Activated naive CD8-positive, alpha-beta T cell treated with anti-CD3 and anti-CD28 coated beads, Interleukin-2, amount 10 ng/mL, durations not matched to agents 7 days and 5 days (primary cell): ENCODE measurements at regions of chr1 and their contacts with region 1.

Region 1: DNA sequence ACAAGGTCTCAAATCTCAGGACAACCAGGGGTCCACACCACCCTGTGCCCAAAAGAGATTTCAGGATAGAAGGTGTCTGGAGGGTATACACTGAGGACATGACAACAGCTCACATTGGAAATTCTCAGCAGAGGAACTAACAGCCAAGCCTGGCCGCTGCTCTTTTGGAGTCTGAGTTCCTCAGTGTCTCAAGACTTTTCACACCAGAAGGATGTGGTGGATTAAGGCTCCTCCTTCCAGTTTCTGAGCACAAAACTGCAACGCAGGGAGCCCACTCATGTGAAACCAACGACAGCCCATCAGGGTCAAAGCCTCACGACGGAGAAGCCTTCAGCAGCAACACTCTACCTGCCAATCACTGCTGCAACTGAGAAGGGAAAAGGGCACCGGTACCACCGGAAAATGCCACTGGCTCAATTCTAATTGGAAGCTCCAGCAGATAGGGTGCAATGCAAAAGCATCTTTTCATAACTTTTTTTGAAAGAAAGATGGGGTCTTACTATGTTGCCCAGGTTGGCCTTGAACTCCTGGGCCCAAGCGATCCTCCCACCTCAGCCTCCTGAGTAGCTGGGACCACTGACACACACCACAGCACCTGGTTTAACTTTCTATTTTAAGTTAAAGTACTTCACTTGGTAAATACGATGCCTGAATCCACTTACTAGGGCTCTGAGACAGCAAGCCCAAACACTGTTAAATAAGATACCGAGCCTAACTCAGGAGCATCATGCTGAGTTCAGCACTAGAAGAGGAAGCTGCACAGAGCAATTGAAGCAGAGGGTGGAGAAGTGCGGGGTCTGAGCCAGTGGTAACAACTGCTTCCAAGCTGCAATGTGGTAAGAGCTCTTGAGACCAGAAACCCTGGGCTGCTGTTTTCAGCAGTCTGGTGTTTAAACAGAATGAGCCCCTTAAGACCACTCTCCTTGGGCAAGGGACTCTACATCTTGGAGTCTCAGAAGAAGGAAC is 7.8 kb downstream of the CAPZB start:
- DNase-seq: peak; percentile 62
- ATAC-seq: peak; percentile 82
- H3K4me3 Mint-ChIP-seq: peak overlapping the region; percentile 84
- H3K27ac Mint-ChIP-seq: peak overlapping the region; percentile 98
- H3K4me1 Mint-ChIP-seq: peaks cover 85% of the 10 kb centered on the region
- H3K27me3 Mint-ChIP-seq: no peaks in the 10 kb centered on the region

Region 2: GRCh38 chr1:19462781-19463503 is 14.6 kb before region 1 on chr1:
- POLR2A ChIA-PET with region 1: interaction called, 49 read pairs
- DNase-seq: peak; percentile 68
- ATAC-seq: peak; percentile 90
- H3K4me3 Mint-ChIP-seq: peak overlapping the region; percentile 83
- H3K27ac Mint-ChIP-seq: peak overlapping the region; percentile 94
- H3K4me1 Mint-ChIP-seq: peaks cover 72% of the 10 kb centered on the region
- H3K27me3 Mint-ChIP-seq: no peaks in the 10 kb centered on the region